Motor neuron (in vitro differentiated cells): ENCODE measurements at regions of chrX and their contacts with region 1.

Region 1: GRCh38 chrX:100447654-100448397 is 37.8 kb upstream of the PCDH19 start:
- ATAC-seq: peak in 6 of 8 experiments; percentile 46 to 96 (median 70)
- H3K4me3 ChIP-seq: peak overlapping the region; percentile 21 to 41 (median 31)
- H3K27ac ChIP-seq: no peak overlapping the region
- H3K4me1 ChIP-seq: no peaks in the 10 kb centered on the region

Region 2: GRCh38 chrX:99722092-99722491 is 725.7 kb before region 1 on chrX:
- in situ Hi-C with region 1: no loop called
- ATAC-seq: no peak
- H3K4me3 ChIP-seq: no peak overlapping the region
- H3K27ac ChIP-seq: no peak overlapping the region
- H3K4me1 ChIP-seq: no peaks in the 10 kb centered on the region

Region 3: DNA sequence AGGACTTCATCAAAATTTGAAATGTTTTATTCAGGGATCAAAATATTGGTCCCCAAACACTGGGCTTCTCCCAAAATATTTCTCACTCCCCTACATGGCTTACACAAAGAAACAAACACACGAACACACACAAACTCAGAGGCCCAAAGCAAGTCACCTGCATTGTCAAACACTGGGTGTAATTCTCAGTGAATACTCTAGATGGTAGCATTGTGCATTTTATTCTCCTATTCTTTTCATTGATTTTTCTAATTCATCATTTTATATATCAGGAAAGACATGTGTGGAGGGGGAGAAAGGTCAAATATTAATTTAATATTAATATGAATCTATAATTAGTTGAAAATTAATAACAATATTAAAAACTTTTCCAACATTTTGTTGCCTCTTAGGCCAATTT is 64.6 kb after region 1 on chrX:
- in situ Hi-C with region 1: loop called in 1 of 9 experiments (anchors 10 kb)
- ATAC-seq: no peak
- H3K4me3 ChIP-seq: no peak overlapping the region
- H3K27ac ChIP-seq: no peak overlapping the region
- H3K4me1 ChIP-seq: no peaks in the 10 kb centered on the region

Region 4: DNA sequence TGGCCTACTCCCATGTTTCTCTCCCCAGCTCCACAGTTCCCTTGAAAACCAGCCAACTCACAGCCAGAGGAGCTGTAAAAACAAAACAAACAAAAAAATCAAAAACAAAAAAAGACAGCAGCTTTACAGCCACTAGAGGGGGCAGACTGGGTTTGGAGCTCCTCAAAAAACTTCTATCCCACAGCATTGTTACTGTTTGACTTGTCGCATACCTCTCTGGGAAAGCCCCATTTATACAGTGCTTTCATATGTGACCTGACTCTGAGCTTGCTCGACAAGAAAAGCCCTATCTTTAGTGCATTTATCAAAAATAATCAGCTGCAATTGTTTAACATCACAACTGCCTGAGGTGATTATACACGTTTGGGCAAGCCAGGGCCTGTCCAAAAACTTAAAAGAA is 167.2 kb after region 1 on chrX:
- in situ Hi-C with region 1: loop called in 1 of 9 experiments (anchors 25 kb)
- ATAC-seq: peak in 4 of 8 experiments; percentile 38 to 85 (median 65)
- H3K4me3 ChIP-seq: no peak overlapping the region
- H3K27ac ChIP-seq: no peak overlapping the region
- H3K4me1 ChIP-seq: no peaks in the 10 kb centered on the region